ENCODE measurements at regions of chr13 and their contacts with region 1.

Region 1: DNA sequence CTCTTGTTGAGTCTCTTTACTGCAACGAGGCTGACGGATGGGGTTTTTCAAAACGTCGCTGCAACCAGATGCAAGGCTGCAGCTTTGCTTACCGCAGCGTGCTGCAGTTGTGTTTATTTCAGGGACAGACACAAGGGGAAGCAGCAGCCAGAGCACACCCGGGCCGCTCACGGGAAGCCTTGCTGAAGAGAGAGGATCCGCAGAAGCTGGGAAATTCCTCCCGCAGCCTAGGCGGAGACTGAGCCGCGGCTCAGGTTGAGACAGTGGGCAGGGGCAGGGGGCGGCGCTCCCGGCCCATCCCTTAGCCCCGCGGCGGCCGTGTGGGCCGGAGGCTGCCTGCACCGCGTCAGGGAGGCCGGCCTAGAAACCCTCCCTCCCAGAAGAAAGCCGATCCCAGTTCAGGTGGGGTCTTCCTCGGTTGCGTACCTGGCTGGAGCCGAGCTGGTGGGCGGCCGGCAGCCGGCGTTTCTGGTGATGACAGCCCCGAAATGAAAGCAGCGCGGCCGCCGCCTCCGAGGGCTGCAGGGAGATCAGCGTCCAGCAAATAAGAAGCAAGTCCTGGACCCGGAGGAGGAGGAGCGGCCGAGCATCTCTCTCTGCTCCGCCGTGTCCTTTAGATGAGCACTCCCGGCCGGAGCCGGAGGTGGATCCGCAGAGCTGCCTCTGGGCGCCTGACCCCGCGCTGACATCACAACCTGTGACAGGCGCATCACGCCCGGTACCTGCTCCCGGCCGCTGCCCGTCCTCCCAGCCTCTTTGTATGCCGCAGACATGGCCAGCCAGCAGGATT is at the start of gene FRY:
- DNase-seq: peak; percentile 87 to 90
- H3K4me3 ChIP-seq: peak within 1 kb of the TSS; percentile 64
- H3K4me3 Mint-ChIP-seq: peak within 1 kb of the TSS; percentile 78
- H3K27ac Mint-ChIP-seq: peak within 1 kb of the TSS; percentile 83
- H3K4me1 ChIP-seq: peaks cover 16% of the 10 kb centered on the region
- H3K4me1 Mint-ChIP-seq: peaks cover 24% of the 10 kb centered on the region
- H3K27me3 ChIP-seq: no peaks in the 10 kb centered on the region
- H3K27me3 Mint-ChIP-seq: no peaks in the 10 kb centered on the region
- CTCF ChIP-seq: peak in 1 of 2 experiments; percentile 31
- total RNA-seq, gene FRY: 91.3 and 118 TPM in 2 replicates

Region 2: GRCh38 chr13:31797154-31797775 is 234.0 kb before region 1 on chr13:
- CTCF ChIA-PET with region 1: no interaction called
- POLR2A ChIA-PET with region 1: no interaction called
- intact Hi-C with region 1: no loop called
- DNase-seq: peak in 1 of 2 experiments; percentile 24
- H3K4me3 ChIP-seq: no peak overlapping the region
- H3K4me3 Mint-ChIP-seq: no peak overlapping the region
- H3K27ac Mint-ChIP-seq: no peak overlapping the region
- H3K4me1 ChIP-seq: 0 out of 2 replicates have a peak, but pooled peaks cover 6% of the 10 kb centered on the region
- H3K4me1 Mint-ChIP-seq: peaks cover 7% of the 10 kb centered on the region
- H3K27me3 ChIP-seq: no peaks in the 10 kb centered on the region
- H3K27me3 Mint-ChIP-seq: peaks cover 3% of the 10 kb centered on the region
- CTCF ChIP-seq: peak; percentile 38 to 39

Region 3: GRCh38 chr13:32045982-32046785 is 15.0 kb after region 1 on chr13:
- CTCF ChIA-PET with region 1: no interaction called
- POLR2A ChIA-PET with region 1: no interaction called
- intact Hi-C with region 1: loop called (anchors 1 kb)
- DNase-seq: peak in 1 of 2 experiments; percentile 21
- H3K4me3 ChIP-seq: no peak overlapping the region
- H3K4me3 Mint-ChIP-seq: no peak overlapping the region
- H3K27ac Mint-ChIP-seq: peak overlapping the region; percentile 74
- H3K4me1 ChIP-seq: peaks cover 18% of the 10 kb centered on the region
- H3K4me1 Mint-ChIP-seq: peaks cover 13% of the 10 kb centered on the region
- H3K27me3 ChIP-seq: no peaks in the 10 kb centered on the region
- H3K27me3 Mint-ChIP-seq: no peaks in the 10 kb centered on the region
- CTCF ChIP-seq: no peak

Region 4: GRCh38 chr13:32059511-32059984 is 28.3 kb after region 1 on chr13:
- CTCF ChIA-PET with region 1: no interaction called
- POLR2A ChIA-PET with region 1: interaction called, 13 read pairs
- intact Hi-C with region 1: loop called (anchors 2 kb)
- DNase-seq: peak; percentile 56 to 58
- H3K4me3 ChIP-seq: no peak overlapping the region
- H3K4me3 Mint-ChIP-seq: peak overlapping the region; percentile 61
- H3K27ac Mint-ChIP-seq: peak overlapping the region; percentile 89
- H3K4me1 ChIP-seq: peaks cover 43% of the 10 kb centered on the region
- H3K4me1 Mint-ChIP-seq: peaks cover 54% of the 10 kb centered on the region
- H3K27me3 ChIP-seq: no peaks in the 10 kb centered on the region
- H3K27me3 Mint-ChIP-seq: no peaks in the 10 kb centered on the region
- CTCF ChIP-seq: no peak

Region 5: DNA sequence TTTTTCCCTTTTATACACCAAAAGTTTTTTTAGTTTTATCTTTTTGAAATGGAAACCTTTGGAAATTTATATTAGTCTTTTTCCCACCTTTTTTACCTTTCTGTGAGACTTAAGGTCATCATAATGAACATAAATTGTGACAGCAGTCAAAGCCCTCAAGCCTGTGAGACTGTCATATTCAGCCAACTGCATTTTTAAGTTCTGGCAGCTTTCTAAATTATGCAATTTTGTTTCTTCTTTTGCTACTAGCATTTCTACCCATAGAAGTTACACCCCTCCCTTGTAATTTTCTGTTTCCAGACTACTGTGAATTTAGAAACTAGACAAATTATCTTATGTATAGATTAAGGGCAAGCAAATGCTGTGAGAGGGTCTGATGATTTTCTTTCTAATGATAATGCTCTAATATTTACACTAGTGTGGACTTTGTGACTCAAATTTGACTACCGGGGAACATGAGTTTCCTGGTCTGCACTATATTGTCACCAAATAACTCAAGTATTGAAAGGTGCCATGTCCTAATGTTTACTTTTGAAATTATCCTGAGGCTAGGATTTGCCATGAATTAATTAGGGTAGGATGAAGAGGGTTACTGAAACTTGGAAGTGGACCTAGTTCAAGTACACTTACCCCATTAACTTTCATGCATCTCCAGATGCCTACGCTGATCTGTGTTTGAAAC is 44.1 kb after region 1 on chr13:
- CTCF ChIA-PET with region 1: no interaction called
- POLR2A ChIA-PET with region 1: no interaction called
- intact Hi-C with region 1: loop called (anchors 5 kb)
- DNase-seq: no peak
- H3K4me3 ChIP-seq: no peak overlapping the region
- H3K4me3 Mint-ChIP-seq: no peak overlapping the region
- H3K27ac Mint-ChIP-seq: no peak overlapping the region
- H3K4me1 ChIP-seq: peaks cover 23% of the 10 kb centered on the region
- H3K4me1 Mint-ChIP-seq: peaks cover 32% of the 10 kb centered on the region
- H3K27me3 ChIP-seq: no peaks in the 10 kb centered on the region
- H3K27me3 Mint-ChIP-seq: no peaks in the 10 kb centered on the region
- CTCF ChIP-seq: no peak

Region 6: DNA sequence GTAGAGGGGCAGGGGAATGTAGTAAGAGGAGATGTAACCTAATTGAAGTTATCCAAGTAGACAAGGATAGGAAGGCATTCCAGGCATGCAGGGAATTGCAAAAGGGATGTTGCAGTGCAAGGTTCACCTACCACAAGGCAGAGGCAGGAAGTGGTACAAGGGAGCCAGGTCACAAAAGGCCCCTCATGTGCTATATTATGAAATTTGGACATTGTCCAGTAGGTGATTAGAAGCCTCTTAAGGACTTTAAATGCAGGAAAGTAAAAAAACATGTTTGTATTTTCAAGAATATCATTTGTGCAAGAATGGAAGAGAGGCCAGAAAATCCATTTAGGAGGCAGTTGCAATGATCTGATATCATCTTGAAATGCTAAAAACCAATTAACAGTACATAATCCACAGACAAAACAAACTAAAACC is 111.7 kb after region 1 on chr13:
- CTCF ChIA-PET with region 1: no interaction called
- POLR2A ChIA-PET with region 1: no interaction called
- intact Hi-C with region 1: loop called (anchors 1 kb)
- DNase-seq: peak; percentile 88 to 93
- H3K4me3 ChIP-seq: no peak overlapping the region
- H3K4me3 Mint-ChIP-seq: peak overlapping the region; percentile 34
- H3K27ac Mint-ChIP-seq: peak overlapping the region; percentile 89
- H3K4me1 ChIP-seq: peaks cover 50% of the 10 kb centered on the region
- H3K4me1 Mint-ChIP-seq: peaks cover 64% of the 10 kb centered on the region
- H3K27me3 ChIP-seq: no peaks in the 10 kb centered on the region; the same call in 1 of the 2 replicates
- H3K27me3 Mint-ChIP-seq: no peaks in the 10 kb centered on the region
- CTCF ChIP-seq: no peak

Region 7: GRCh38 chr13:32228330-32229041 is 197.3 kb after region 1 on chr13:
- CTCF ChIA-PET with region 1: no interaction called
- POLR2A ChIA-PET with region 1: no interaction called
- intact Hi-C with region 1: loop called (anchors 5 kb)
- DNase-seq: peak; percentile 81 to 85
- H3K4me3 ChIP-seq: no peak overlapping the region
- H3K4me3 Mint-ChIP-seq: peak overlapping the region; percentile 6
- H3K27ac Mint-ChIP-seq: peak overlapping the region; percentile 14
- H3K4me1 ChIP-seq: peaks cover 46% of the 10 kb centered on the region
- H3K4me1 Mint-ChIP-seq: peaks cover 26% of the 10 kb centered on the region
- H3K27me3 ChIP-seq: no peaks in the 10 kb centered on the region
- H3K27me3 Mint-ChIP-seq: no peaks in the 10 kb centered on the region
- CTCF ChIP-seq: peak; percentile 10 to 39

Region 8: GRCh38 chr13:32261567-32261966 is 230.3 kb after region 1 on chr13:
- CTCF ChIA-PET with region 1: no interaction called
- POLR2A ChIA-PET with region 1: no interaction called
- intact Hi-C with region 1: no loop called
- DNase-seq: no peak
- H3K4me3 ChIP-seq: no peak overlapping the region
- H3K4me3 Mint-ChIP-seq: peak overlapping the region; percentile 41
- H3K27ac Mint-ChIP-seq: peak overlapping the region; percentile 77
- H3K4me1 ChIP-seq: peaks cover 84% of the 10 kb centered on the region
- H3K4me1 Mint-ChIP-seq: peaks cover 41% of the 10 kb centered on the region
- H3K27me3 ChIP-seq: no peaks in the 10 kb centered on the region
- H3K27me3 Mint-ChIP-seq: no peaks in the 10 kb centered on the region
- CTCF ChIP-seq: no peak

Measured in Caco-2 (cell line).